Activated CD4-positive, alpha-beta memory T cell treated with anti-CD3 and anti-CD28 coated beads for 36 hours (primary cell): ENCODE measurements at regions of chr1 and their contacts with region 1.

Region 1: GRCh38 chr1:155277070-155277895 is at the start of gene HCN3:
- DNase-seq: peak; percentile 96
- H3K4me3 Mint-ChIP-seq: peak within 1 kb of the TSS; percentile 65
- H3K27ac Mint-ChIP-seq: peak within 1 kb of the TSS; percentile 61
- H3K4me1 Mint-ChIP-seq: peaks cover 32% of the 10 kb centered on the region
- H3K27me3 Mint-ChIP-seq: no peaks in the 10 kb centered on the region
- total RNA-seq, gene HCN3: 1.9 to 2.4 TPM

Region 2: GRCh38 chr1:155308493-155309422 is 31.5 kb after region 1 on chr1 and contains the start of gene FDPS:
- CTCF ChIA-PET with region 1: interaction called, 7 read pairs
- POLR2A ChIA-PET with region 1: interaction called, 6 read pairs
- intact Hi-C with region 1: loop called (anchors 1 kb)
- DNase-seq: peak; percentile 99
- H3K4me3 Mint-ChIP-seq: peak within 1 kb of the TSS; percentile 97
- H3K27ac Mint-ChIP-seq: peak within 1 kb of the TSS; percentile 99
- H3K4me1 Mint-ChIP-seq: peaks cover 29% of the 10 kb centered on the region
- H3K27me3 Mint-ChIP-seq: no peaks in the 10 kb centered on the region
- total RNA-seq, gene FDPS: 378 to 395 TPM

Region 3: DNA sequence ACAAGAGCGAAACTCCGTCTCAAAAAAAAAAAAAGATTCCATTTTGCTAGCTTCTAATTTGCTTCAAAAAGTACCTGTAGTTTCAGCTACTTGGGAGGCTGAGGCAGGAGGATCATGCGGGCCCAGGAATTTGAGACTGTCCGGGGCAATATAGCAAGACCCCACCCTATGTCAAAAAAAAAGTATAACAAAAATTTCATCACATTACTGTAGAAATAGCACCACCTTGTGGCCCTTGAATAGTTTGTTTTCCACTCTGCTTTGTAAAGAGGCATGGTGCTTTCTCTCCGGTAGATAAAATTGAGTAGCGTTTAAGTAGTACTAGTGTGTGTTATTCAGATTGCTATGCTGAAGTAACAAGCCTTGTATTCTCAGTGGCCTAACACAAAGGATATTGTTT is 314.5 kb after region 1 on chr1:
- CTCF ChIA-PET with region 1: no interaction called
- POLR2A ChIA-PET with region 1: no interaction called
- intact Hi-C with region 1: loop called (anchors 10 kb)
- DNase-seq: no peak
- H3K4me3 Mint-ChIP-seq: no peak overlapping the region
- H3K27ac Mint-ChIP-seq: no peak overlapping the region
- H3K4me1 Mint-ChIP-seq: no peaks in the 10 kb centered on the region
- H3K27me3 Mint-ChIP-seq: no peaks in the 10 kb centered on the region